A549 (cell line): ENCODE measurements at regions of chr3 and their contacts with region 1.

Region 1: DNA sequence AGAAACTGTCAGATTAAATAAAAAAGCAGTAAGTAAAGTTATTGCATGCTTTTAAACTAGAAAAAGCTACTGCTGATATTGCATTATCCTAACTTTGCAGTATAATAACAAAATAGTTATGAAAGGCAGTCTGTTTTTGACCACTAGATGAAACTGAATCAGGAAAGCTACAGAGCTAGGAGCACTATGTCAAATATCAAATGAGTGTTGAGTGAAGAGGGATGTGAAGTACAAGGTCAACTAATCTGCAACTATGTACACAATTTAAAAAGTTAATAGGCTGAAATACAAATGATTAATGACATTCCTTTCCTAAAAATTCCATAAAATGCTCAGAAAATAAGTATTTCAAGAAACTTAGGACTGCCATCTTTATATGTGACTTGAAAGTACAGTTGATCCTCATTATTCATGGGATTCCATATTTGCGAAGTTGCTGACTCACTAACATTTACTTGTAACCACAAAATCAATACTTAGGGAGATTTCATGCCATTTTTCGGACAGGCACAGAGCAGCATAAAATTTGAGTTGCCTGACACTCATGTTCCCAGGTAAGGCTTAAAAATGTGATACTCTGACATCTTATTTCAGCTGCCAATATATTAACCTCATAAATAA is 34.5 kb downstream of the SLC4A7 start:
- DNase-seq: peak in 1 of 2 experiments; percentile 27
- ATAC-seq: no peak; a peak in 1 of 6 replicates
- H3K4me3 ChIP-seq: no peak overlapping the region
- H3K27ac ChIP-seq: peak overlapping the region; percentile 4 to 59; a peak in 2 of 6 replicates
- H3K4me1 ChIP-seq: peaks cover 32% of the 10 kb centered on the region
- CTCF ChIP-seq: no peak
- EP300 ChIP-seq: no peak
- POLR2A ChIP-seq: no peak
- RAD21 ChIP-seq: no peak

Region 2: DNA sequence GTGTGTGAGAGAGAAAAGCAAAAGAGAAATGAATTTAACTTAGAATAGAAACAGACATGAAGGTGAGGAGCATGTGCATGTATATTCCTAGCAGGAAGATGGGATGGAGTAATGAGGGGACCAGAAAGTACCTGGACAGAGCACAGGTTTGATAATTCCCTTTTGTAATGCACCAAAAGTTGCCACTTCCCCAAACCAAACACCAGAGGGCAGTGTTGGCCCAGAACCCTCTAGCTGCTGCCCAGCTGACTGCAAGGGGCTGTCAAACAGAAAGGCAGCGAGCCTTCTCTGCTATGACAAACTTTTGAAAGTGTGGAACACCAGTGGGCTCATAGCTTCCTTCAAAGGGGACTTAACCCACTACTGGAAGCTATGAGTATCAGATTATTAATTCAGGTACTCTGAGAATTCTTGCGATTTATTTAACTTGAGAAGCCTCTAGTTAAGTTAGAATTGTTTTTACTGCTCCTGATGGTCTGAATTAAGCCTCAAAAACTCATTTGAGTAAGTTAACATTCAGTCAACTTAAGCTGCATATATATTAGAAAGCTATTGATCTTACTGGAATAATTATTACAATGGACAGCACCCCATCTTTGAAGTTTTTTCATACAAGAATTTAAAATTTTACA is 315.4 kb before region 1 on chr3:
- CTCF ChIA-PET with region 1: no interaction called
- POLR2A ChIA-PET with region 1: no interaction called
- DNase-seq: peak; percentile 43 to 75
- ATAC-seq: peak; percentile 89 to 98
- H3K4me3 ChIP-seq: no peak overlapping the region
- H3K27ac ChIP-seq: no peak overlapping the region
- H3K4me1 ChIP-seq: peaks cover 16% of the 10 kb centered on the region; the same call in 2 of the 3 replicates
- CTCF ChIP-seq: peak; percentile 92
- EP300 ChIP-seq: no peak
- POLR2A ChIP-seq: no peak
- RAD21 ChIP-seq: peak; percentile 94 to 98

Region 3: GRCh38 chr3:27467545-27467944 is 17.9 kb after region 1 on chr3:
- CTCF ChIA-PET with region 1: interaction called, 10 read pairs
- POLR2A ChIA-PET with region 1: no interaction called
- DNase-seq: peak; percentile 57 to 60
- ATAC-seq: peak; percentile 82
- H3K4me3 ChIP-seq: no peak overlapping the region
- H3K27ac ChIP-seq: peak overlapping the region in 1 of 2 experiments; percentile 64; a peak in 2 of 6 replicates
- H3K4me1 ChIP-seq: peaks cover 18% of the 10 kb centered on the region; the same call in 2 of the 3 replicates
- CTCF ChIP-seq: peak; percentile 74
- EP300 ChIP-seq: no peak
- POLR2A ChIP-seq: no peak
- RAD21 ChIP-seq: peak; percentile 75 to 79